Activated B cell treated with CpG ODN at 0.5 μM for 24 hours (primary cell): ENCODE measurements at regions of chr14 and their contacts with region 1.

Region 1: DNA sequence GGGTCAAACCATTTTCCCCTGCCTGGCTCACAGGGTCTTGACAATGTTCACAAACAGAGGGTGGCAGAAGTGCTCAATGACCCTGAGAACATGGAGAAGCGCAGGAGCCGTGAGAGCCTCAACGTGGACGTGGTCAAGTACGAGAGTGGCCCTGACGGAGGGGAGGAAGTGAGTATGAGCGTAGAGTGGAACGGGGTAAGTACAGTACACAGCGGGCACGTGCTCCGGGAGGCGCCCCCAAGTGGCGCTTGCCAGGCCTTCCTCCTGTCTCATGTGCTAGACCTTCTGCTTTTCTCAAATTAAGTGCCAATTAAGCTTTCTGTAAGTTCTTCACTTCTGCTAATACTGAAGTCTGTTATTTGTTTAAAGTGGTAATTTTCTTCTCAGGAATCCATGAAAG is 35.9 kb downstream of the XRCC3 start:
- DNase-seq: peak; percentile 54
- ATAC-seq: peak; percentile 99
- H3K4me3 Mint-ChIP-seq: no peak overlapping the region
- H3K27ac Mint-ChIP-seq: peak overlapping the region; percentile 60
- H3K4me1 Mint-ChIP-seq: peaks cover 16% of the 10 kb centered on the region
- H3K27me3 Mint-ChIP-seq: no peaks in the 10 kb centered on the region
- CTCF ChIP-seq: no peak

Region 2: DNA sequence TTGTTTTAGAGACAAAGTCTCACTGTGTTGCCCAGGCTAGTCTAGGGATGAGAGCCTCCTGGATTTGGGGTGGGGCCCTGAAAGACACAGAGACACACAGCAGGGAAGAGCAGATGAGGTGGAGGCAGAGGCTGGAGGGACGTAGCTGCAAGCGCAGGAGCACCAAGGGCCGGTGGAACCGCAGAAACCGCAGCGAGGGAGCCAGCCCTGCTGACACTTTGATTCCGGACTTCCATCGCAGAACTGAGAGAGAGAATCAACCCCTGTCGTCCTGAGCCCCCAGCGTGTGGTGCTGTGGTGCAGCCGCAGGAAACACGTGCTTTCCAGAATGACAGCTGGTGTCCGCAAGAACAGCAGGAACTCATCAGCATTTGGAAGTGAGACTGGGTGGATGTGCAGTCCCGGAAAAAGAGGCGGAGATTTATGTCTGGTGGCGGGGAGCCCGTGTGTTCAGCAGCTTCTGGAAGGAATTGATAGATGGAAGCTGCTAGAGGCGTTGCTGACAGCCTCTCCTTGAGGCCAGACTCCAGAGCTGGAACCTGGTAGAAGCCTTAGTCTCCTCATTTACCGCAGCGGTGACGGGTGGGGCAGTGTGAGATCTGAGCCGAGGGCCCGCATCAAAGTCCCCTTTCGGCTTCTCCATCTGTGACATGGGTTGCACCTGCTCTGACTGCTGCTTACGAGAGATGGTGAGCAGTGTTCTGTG is 72.2 kb before region 1 on chr14:
- CTCF ChIA-PET with region 1: interaction called, 4 read pairs
- POLR2A ChIA-PET with region 1: no interaction called
- intact Hi-C with region 1: loop called (anchors 1 kb)
- DNase-seq: peak; percentile 25
- ATAC-seq: peak; percentile 80
- H3K4me3 Mint-ChIP-seq: peak overlapping the region; percentile 79
- H3K27ac Mint-ChIP-seq: no peak overlapping the region
- H3K4me1 Mint-ChIP-seq: peaks cover 18% of the 10 kb centered on the region
- H3K27me3 Mint-ChIP-seq: peaks cover 6% of the 10 kb centered on the region
- CTCF ChIP-seq: no peak

Region 3: GRCh38 chr14:104370256-104370870 is 691.0 kb after region 1 on chr14:
- CTCF ChIA-PET with region 1: no interaction called
- POLR2A ChIA-PET with region 1: no interaction called
- intact Hi-C with region 1: no loop called
- DNase-seq: no peak
- ATAC-seq: no peak
- H3K4me3 Mint-ChIP-seq: no peak overlapping the region
- H3K27ac Mint-ChIP-seq: no peak overlapping the region
- H3K4me1 Mint-ChIP-seq: no peaks in the 10 kb centered on the region
- H3K27me3 Mint-ChIP-seq: peaks cover 6% of the 10 kb centered on the region
- CTCF ChIP-seq: no peak